ENCODE measurements at regions of chr11 and their contacts with region 1.

Region 1: GRCh38 chr11:110429731-110430266 is at the start of gene FDX1:
- DNase-seq: peak; percentile 91
- ATAC-seq: peak; percentile 87
- H3K4me3 ChIP-seq: peak within 1 kb of the TSS; percentile 74 to 91 (median 80)
- H3K4me3 Mint-ChIP-seq: peak within 1 kb of the TSS; percentile 98
- H3K27ac ChIP-seq: peak within 1 kb of the TSS; percentile 63 to 81
- H3K27ac Mint-ChIP-seq: peak within 1 kb of the TSS; percentile 95
- H3K4me1 ChIP-seq: peaks cover 22 to 28% of the 10 kb centered on the region in 2 donors
- H3K4me1 Mint-ChIP-seq: peaks cover 36% of the 10 kb centered on the region
- H3K27me3 ChIP-seq: no peaks in the 10 kb centered on the region
- H3K27me3 Mint-ChIP-seq: no peaks in the 10 kb centered on the region
- CTCF ChIP-seq: peak; percentile 71
- total RNA-seq, gene FDX1: 10.0 and 11.2 TPM in 2 replicates

Region 2: DNA sequence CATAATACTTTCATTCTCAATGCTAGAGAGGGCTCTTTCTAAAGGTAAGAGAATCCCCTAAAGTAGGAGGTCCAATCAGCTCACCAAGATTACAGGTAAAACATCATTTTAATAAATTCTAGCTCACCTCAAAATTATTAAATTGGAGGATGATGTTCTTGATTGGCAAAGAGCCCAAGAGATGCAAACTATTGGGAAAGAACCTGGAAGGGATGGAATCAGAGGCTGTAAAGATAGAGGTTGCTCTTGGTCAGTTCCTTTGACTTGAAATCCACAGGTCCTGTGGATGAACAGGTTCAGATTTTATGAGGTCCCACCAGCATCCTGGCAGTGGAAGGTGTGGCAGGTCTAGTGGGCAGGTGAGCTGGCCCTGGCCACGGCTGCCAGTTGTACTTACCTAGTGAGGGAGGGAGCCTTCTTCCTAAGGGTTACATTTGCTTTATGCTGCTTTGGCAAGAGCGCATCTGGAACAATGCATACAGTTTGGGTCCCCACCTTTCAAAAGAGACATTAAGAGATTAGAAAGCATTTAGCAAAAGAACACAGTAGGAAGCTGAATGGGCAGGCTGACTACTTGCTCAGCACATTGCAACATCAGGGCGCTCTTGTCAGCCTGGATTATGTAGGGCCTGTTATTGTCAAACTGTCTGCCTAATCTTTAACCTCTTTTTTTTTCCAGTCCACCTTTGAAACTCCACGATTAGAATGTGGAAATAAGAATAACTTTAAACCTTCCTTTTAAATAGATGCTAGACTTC is 230.4 kb before region 1 on chr11:
- CTCF ChIA-PET with region 1: interaction called, 172 read pairs
- POLR2A ChIA-PET with region 1: no interaction called
- intact Hi-C with region 1: loop called (anchors 1 kb)
- DNase-seq: no peak
- ATAC-seq: no peak
- H3K4me3 ChIP-seq: no peak overlapping the region
- H3K4me3 Mint-ChIP-seq: no peak overlapping the region
- H3K27ac ChIP-seq: no peak overlapping the region
- H3K27ac Mint-ChIP-seq: no peak overlapping the region
- H3K4me1 ChIP-seq: no peaks in the 10 kb centered on the region
- H3K4me1 Mint-ChIP-seq: no peaks in the 10 kb centered on the region
- H3K27me3 ChIP-seq: peaks cover 0 to 16% (median 11%) of the 10 kb centered on the region in 4 experiments
- H3K27me3 Mint-ChIP-seq: peaks cover 38% of the 10 kb centered on the region
- CTCF ChIP-seq: no peak

Region 3: GRCh38 chr11:110376711-110377324 is 53.0 kb before region 1 on chr11:
- CTCF ChIA-PET with region 1: interaction called, 13 read pairs
- POLR2A ChIA-PET with region 1: interaction called, 3 read pairs
- intact Hi-C with region 1: loop called (anchors 2 kb)
- DNase-seq: peak; percentile 61
- ATAC-seq: peak; percentile 28
- H3K4me3 ChIP-seq: no peak overlapping the region
- H3K4me3 Mint-ChIP-seq: peak overlapping the region; percentile 35
- H3K27ac ChIP-seq: no peak overlapping the region
- H3K27ac Mint-ChIP-seq: no peak overlapping the region
- H3K4me1 ChIP-seq: peaks cover 0 to 3% of the 10 kb centered on the region in 2 donors
- H3K4me1 Mint-ChIP-seq: no peaks in the 10 kb centered on the region
- H3K27me3 ChIP-seq: peaks cover 0 to 3% (median 0%) of the 10 kb centered on the region in 4 experiments
- H3K27me3 Mint-ChIP-seq: peaks cover 3% of the 10 kb centered on the region
- CTCF ChIP-seq: peak; percentile 80

Region 4: GRCh38 chr11:110392056-110392455 is 37.7 kb before region 1 on chr11:
- CTCF ChIA-PET with region 1: no interaction called
- POLR2A ChIA-PET with region 1: no interaction called
- intact Hi-C with region 1: no loop called
- DNase-seq: no peak
- ATAC-seq: no peak
- H3K4me3 ChIP-seq: no peak overlapping the region
- H3K4me3 Mint-ChIP-seq: no peak overlapping the region
- H3K27ac ChIP-seq: no peak overlapping the region
- H3K27ac Mint-ChIP-seq: no peak overlapping the region
- H3K4me1 ChIP-seq: no peaks in the 10 kb centered on the region
- H3K4me1 Mint-ChIP-seq: no peaks in the 10 kb centered on the region
- H3K27me3 ChIP-seq: peaks cover 0 to 2% (median 0%) of the 10 kb centered on the region in 4 experiments
- H3K27me3 Mint-ChIP-seq: peaks cover 50% of the 10 kb centered on the region
- CTCF ChIP-seq: no peak

Region 5: GRCh38 chr11:110447897-110448745 is 18.3 kb after region 1 on chr11:
- CTCF ChIA-PET with region 1: interaction called, 34 read pairs
- POLR2A ChIA-PET with region 1: no interaction called
- intact Hi-C with region 1: no loop called
- DNase-seq: peak; percentile 45
- ATAC-seq: no peak
- H3K4me3 ChIP-seq: no peak overlapping the region
- H3K4me3 Mint-ChIP-seq: no peak overlapping the region
- H3K27ac ChIP-seq: no peak overlapping the region
- H3K27ac Mint-ChIP-seq: no peak overlapping the region
- H3K4me1 ChIP-seq: no peaks in the 10 kb centered on the region
- H3K4me1 Mint-ChIP-seq: peaks cover 13% of the 10 kb centered on the region
- H3K27me3 ChIP-seq: no peaks in the 10 kb centered on the region
- H3K27me3 Mint-ChIP-seq: no peaks in the 10 kb centered on the region
- CTCF ChIP-seq: peak; percentile 77

Region 6: GRCh38 chr11:110470716-110471115 is 40.9 kb after region 1 on chr11:
- CTCF ChIA-PET with region 1: no interaction called
- POLR2A ChIA-PET with region 1: no interaction called
- intact Hi-C with region 1: no loop called
- DNase-seq: no peak
- ATAC-seq: no peak
- H3K4me3 ChIP-seq: no peak overlapping the region
- H3K4me3 Mint-ChIP-seq: no peak overlapping the region
- H3K27ac ChIP-seq: no peak overlapping the region
- H3K27ac Mint-ChIP-seq: no peak overlapping the region
- H3K4me1 ChIP-seq: no peaks in the 10 kb centered on the region
- H3K4me1 Mint-ChIP-seq: no peaks in the 10 kb centered on the region
- H3K27me3 ChIP-seq: no peaks in the 10 kb centered on the region
- H3K27me3 Mint-ChIP-seq: no peaks in the 10 kb centered on the region
- CTCF ChIP-seq: no peak

Region 7: GRCh38 chr11:111177037-111177871 is 747.5 kb after region 1 on chr11:
- CTCF ChIA-PET with region 1: interaction called, 3 read pairs
- POLR2A ChIA-PET with region 1: no interaction called
- intact Hi-C with region 1: loop called (anchors 5 kb)
- DNase-seq: peak; percentile 86
- ATAC-seq: peak; percentile 83
- H3K4me3 ChIP-seq: peak overlapping the region in 2 of 5 experiments; percentile 29 to 42
- H3K4me3 Mint-ChIP-seq: peak overlapping the region; percentile 69
- H3K27ac ChIP-seq: peak overlapping the region; percentile 84 to 90
- H3K27ac Mint-ChIP-seq: peak overlapping the region; percentile 95
- H3K4me1 ChIP-seq: peaks cover 62 to 64% of the 10 kb centered on the region in 2 donors
- H3K4me1 Mint-ChIP-seq: peaks cover 67% of the 10 kb centered on the region
- H3K27me3 ChIP-seq: no peaks in the 10 kb centered on the region
- H3K27me3 Mint-ChIP-seq: no peaks in the 10 kb centered on the region
- CTCF ChIP-seq: no peak

Region 8: GRCh38 chr11:112219476-112220232 is 1789.9 kb after region 1 on chr11:
- CTCF ChIA-PET with region 1: no interaction called
- POLR2A ChIA-PET with region 1: no interaction called
- intact Hi-C with region 1: loop called (anchors 10 kb)
- DNase-seq: peak; percentile 87
- ATAC-seq: peak; percentile 99
- H3K4me3 ChIP-seq: no peak overlapping the region
- H3K4me3 Mint-ChIP-seq: no peak overlapping the region
- H3K27ac ChIP-seq: no peak overlapping the region
- H3K27ac Mint-ChIP-seq: no peak overlapping the region
- H3K4me1 ChIP-seq: peaks cover 0 to 6% of the 10 kb centered on the region in 2 donors
- H3K4me1 Mint-ChIP-seq: peaks cover 3% of the 10 kb centered on the region
- H3K27me3 ChIP-seq: no peaks in the 10 kb centered on the region
- H3K27me3 Mint-ChIP-seq: no peaks in the 10 kb centered on the region
- CTCF ChIP-seq: peak; percentile 78

Measured in B cell (primary cell).